Activated CD8-positive, alpha-beta T cell treated with anti-CD3 and anti-CD28 coated beads, Interleukin-2, amount 10 ng/mL, durations not matched to agents 7 days and 5 days (primary cell): ENCODE measurements at regions of chr11 and their contacts with region 1.

Region 1: DNA sequence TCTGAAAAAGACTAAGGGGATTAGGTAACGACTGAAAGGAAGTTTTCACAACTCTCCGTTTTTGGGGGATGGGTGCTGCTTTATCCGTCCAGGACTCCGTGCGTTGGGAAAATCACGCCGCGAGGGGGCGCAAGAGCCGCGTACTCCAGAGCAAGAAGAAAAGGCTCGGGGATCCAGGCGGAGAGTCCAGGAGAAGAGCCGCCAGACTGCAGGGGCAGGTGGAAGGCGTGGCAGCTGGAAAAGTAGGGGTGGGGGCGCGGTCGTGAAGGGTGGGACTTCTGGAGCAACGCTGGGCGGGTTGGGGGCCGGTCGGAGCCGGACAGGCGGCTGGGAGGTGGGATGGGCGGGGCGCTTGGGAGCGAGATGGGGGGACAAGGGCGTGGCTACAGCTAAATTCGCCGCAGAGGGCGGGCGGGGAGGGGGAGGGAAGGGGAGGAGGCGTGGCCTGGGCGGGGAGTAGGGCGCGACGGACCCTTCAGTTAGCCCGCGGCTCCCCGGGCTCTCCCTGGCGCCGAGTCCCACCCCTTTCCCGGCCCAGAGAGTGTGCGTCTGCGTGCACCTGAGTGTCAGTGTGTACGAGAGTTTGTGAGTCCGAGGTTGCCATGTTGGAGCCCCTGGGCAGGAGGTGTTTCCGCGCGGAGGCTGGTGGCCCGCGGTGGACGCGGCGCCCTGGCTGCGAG is 613 bp upstream of the ARHGEF17 start:
- DNase-seq: peak; percentile 94
- ATAC-seq: peak; percentile 77
- H3K4me3 Mint-ChIP-seq: peak overlapping the region; percentile 84
- H3K27ac Mint-ChIP-seq: peak overlapping the region; percentile 41
- H3K4me1 Mint-ChIP-seq: peaks cover 10% of the 10 kb centered on the region
- H3K27me3 Mint-ChIP-seq: peaks cover 28% of the 10 kb centered on the region

Region 2: DNA sequence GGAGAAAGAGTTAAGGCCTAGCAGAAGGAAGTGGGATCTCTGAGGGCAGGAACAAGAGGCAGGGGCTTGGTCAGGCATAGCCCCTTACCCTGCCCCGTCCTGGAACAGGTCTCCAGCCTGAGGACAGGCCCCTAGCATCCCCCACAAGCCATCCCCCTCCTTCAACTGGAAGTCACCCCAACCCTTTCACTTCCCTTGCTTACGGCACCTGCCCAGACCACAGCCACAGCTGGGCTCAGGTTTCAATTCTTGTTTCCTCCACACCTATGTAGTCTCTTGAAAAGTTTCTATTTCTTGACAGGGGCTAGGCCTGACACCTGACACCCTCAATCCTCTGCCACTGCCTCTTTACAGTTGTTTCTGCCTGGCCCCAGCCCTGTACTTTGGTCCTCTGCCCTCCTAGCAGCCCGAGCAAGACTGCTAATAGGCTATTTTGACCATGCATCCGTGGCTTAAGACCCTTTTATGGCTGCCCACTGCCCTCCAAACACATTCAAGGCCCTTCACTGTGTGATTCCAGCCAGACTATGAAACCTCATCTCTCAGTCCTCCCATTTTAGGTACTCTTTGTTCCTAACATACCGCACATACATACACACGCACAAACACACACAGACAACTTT is 154.5 kb before region 1 on chr11:
- CTCF ChIA-PET with region 1: no interaction called
- POLR2A ChIA-PET with region 1: no interaction called
- DNase-seq: peak; percentile 84
- ATAC-seq: peak; percentile 78
- H3K4me3 Mint-ChIP-seq: peak overlapping the region; percentile 37
- H3K27ac Mint-ChIP-seq: peak overlapping the region; percentile 92
- H3K4me1 Mint-ChIP-seq: peaks cover 96% of the 10 kb centered on the region
- H3K27me3 Mint-ChIP-seq: no peaks in the 10 kb centered on the region

Region 3: GRCh38 chr11:73288873-73289707 is 18.4 kb before region 1 on chr11:
- CTCF ChIA-PET with region 1: interaction called, 16 read pairs
- POLR2A ChIA-PET with region 1: no interaction called
- DNase-seq: peak; percentile 59
- ATAC-seq: peak; percentile 66
- H3K4me3 Mint-ChIP-seq: no peak overlapping the region
- H3K27ac Mint-ChIP-seq: no peak overlapping the region
- H3K4me1 Mint-ChIP-seq: peaks cover 23% of the 10 kb centered on the region
- H3K27me3 Mint-ChIP-seq: peaks cover 10% of the 10 kb centered on the region

Region 4: GRCh38 chr11:73295231-73295995 is 12.1 kb before region 1 on chr11:
- CTCF ChIA-PET with region 1: interaction called, 36 read pairs
- POLR2A ChIA-PET with region 1: interaction called, 4 read pairs
- DNase-seq: peak; percentile 86
- ATAC-seq: peak; percentile 83
- H3K4me3 Mint-ChIP-seq: no peak overlapping the region
- H3K27ac Mint-ChIP-seq: no peak overlapping the region
- H3K4me1 Mint-ChIP-seq: no peaks in the 10 kb centered on the region
- H3K27me3 Mint-ChIP-seq: peaks cover 23% of the 10 kb centered on the region

Region 5: DNA sequence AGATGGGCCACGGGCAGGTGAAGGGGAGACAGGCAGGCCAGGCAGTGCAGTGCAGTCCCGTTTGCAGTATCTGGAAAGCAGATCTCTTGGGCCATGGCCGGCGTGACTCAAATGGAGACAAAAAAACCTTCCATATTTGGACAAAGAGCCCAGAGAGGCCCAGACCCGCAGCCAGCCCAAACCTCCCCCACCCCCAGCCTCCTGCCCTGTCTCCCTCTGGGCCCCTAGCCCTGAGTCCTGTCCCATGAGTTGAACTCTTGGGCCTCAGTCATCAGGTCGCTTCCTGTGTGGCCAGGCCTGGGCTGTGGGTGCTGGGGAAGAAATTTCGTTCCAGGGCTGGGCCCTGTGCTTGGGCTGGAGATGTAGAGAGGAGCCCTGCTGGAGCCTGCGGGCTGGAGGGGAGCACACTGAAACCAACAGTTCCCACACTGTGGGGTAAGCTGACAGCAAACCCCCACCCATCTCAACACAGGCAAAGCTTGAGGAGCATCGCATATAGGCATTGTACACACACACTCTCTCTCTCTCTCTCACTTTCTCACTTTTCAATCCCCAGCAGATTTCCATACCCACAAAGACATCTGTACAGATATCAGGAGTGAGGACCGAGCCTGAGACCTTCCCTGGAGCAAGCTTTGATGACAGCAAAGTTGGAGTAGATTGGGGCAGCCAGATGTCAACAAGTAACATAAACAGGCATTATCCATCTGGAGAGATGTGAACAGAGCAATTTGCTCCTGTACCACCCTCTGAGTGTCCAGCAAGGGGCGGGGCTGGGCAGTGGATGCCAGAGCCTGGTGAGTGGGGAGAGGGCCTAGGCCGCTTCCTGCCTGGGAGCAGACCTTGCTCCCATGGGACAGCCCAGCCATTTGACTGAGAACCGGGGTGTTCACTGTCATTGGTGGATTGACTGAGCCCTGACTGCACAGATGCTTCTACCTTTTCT is 17.8 kb after region 1 on chr11:
- CTCF ChIA-PET with region 1: interaction called, 18 read pairs
- POLR2A ChIA-PET with region 1: no interaction called
- DNase-seq: no peak
- ATAC-seq: no peak
- H3K4me3 Mint-ChIP-seq: no peak overlapping the region
- H3K27ac Mint-ChIP-seq: no peak overlapping the region
- H3K4me1 Mint-ChIP-seq: peaks cover 23% of the 10 kb centered on the region
- H3K27me3 Mint-ChIP-seq: peaks cover 2% of the 10 kb centered on the region

Region 6: GRCh38 chr11:73384872-73385689 is 77.6 kb after region 1 on chr11:
- CTCF ChIA-PET with region 1: interaction called, 18 read pairs
- POLR2A ChIA-PET with region 1: no interaction called
- DNase-seq: peak; percentile 71
- ATAC-seq: peak; percentile 68
- H3K4me3 Mint-ChIP-seq: peak overlapping the region; percentile 65
- H3K27ac Mint-ChIP-seq: peak overlapping the region; percentile 94
- H3K4me1 Mint-ChIP-seq: peaks cover 88% of the 10 kb centered on the region
- H3K27me3 Mint-ChIP-seq: no peaks in the 10 kb centered on the region

Region 7: GRCh38 chr11:73463359-73463758 is 155.9 kb after region 1 on chr11:
- CTCF ChIA-PET with region 1: no interaction called
- POLR2A ChIA-PET with region 1: no interaction called
- DNase-seq: no peak
- ATAC-seq: no peak
- H3K4me3 Mint-ChIP-seq: no peak overlapping the region
- H3K27ac Mint-ChIP-seq: no peak overlapping the region
- H3K4me1 Mint-ChIP-seq: peaks cover 6% of the 10 kb centered on the region
- H3K27me3 Mint-ChIP-seq: no peaks in the 10 kb centered on the region